ENCODE measurements at regions of chr2 and their contacts with region 1.

Region 1: DNA sequence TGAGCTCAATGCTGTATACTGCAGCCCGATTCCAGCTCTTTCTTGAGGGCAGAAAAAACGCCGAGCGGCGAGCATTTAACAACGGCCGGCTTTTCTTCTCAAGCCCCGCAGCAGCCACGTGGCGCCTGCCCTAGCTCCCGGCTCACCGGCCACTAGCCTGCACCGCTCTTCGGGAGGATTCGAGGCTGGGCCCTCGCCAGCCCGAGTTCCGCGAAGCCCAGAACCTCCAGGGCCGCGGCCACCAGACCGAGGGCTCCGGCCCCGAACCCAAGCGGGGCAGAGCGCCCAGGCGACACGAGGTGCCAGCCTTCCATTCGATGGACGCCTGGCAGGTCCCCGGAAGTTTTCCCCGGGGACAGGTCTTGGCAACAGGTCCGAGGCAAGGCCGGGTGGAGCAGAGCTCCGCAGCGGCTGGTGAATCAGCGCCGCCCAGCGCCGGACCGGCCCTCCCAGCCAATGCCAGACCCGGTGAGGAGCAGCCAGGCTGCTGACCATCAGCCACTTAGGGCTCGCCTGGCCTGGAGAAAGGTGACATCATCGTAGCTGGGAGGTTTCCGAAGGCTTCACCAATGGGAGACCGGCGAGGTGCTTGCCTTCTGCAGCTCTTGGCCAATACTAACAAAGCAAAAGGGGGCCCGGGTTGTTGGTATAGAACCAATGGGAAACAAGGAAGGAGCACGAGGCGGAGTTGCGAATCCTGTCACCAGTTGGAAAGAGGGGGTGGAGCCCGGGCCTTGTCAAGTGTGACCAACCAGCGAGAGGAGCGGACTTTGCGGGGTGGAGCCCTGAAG is 544 bp upstream of the MXD1 start:
- DNase-seq: peak; percentile 99 to 100 (median 100)
- H3K4me3 ChIP-seq: peak overlapping the region; percentile 89
- H3K4me3 Mint-ChIP-seq: peak overlapping the region; percentile 81 to 92 (median 88)
- H3K27ac ChIP-seq: peak overlapping the region; percentile 94
- H3K27ac Mint-ChIP-seq: peak overlapping the region; percentile 78 to 97 (median 92)
- H3K4me1 ChIP-seq: peaks cover 12% of the 10 kb centered on the region
- H3K4me1 Mint-ChIP-seq: peaks cover 24 to 44% (median 39%) of the 10 kb centered on the region in 3 donors
- H3K27me3 ChIP-seq: no peaks in the 10 kb centered on the region
- H3K27me3 Mint-ChIP-seq: no peaks in the 10 kb centered on the region

Region 2: GRCh38 chr2:70070541-70071268 is 156.3 kb after region 1 on chr2:
- CTCF ChIA-PET with region 1: interaction called, 20 read pairs
- POLR2A ChIA-PET with region 1: interaction called, 19 read pairs
- DNase-seq: peak; percentile 30 to 79 (median 74)
- H3K4me3 ChIP-seq: peak overlapping the region; percentile 33
- H3K4me3 Mint-ChIP-seq: peak overlapping the region; percentile 54 to 86 (median 78)
- H3K27ac ChIP-seq: peak overlapping the region; percentile 12
- H3K27ac Mint-ChIP-seq: peak overlapping the region; percentile 87 to 99 (median 98)
- H3K4me1 ChIP-seq: peaks cover 48% of the 10 kb centered on the region
- H3K4me1 Mint-ChIP-seq: peaks cover 41 to 52% (median 47%) of the 10 kb centered on the region in 3 donors
- H3K27me3 ChIP-seq: no peaks in the 10 kb centered on the region
- H3K27me3 Mint-ChIP-seq: no peaks in the 10 kb centered on the region

Region 3: GRCh38 chr2:70124983-70125480 is 210.7 kb after region 1 on chr2:
- CTCF ChIA-PET with region 1: interaction called, 8 read pairs
- POLR2A ChIA-PET with region 1: interaction called, 23 read pairs
- DNase-seq: peak in 4 of 5 donors; percentile 45 to 79 (median 62)
- H3K4me3 ChIP-seq: peak overlapping the region; percentile 84
- H3K4me3 Mint-ChIP-seq: peak overlapping the region; percentile 86 to 98 (median 95)
- H3K27ac ChIP-seq: peak overlapping the region; percentile 90
- H3K27ac Mint-ChIP-seq: peak overlapping the region; percentile 98 to 100 (median 100)
- H3K4me1 ChIP-seq: peaks cover 63% of the 10 kb centered on the region
- H3K4me1 Mint-ChIP-seq: peaks cover 61 to 82% (median 81%) of the 10 kb centered on the region in 3 donors
- H3K27me3 ChIP-seq: no peaks in the 10 kb centered on the region
- H3K27me3 Mint-ChIP-seq: peaks cover 0 to 6% of the 10 kb centered on the region in 2 donors

Region 4: DNA sequence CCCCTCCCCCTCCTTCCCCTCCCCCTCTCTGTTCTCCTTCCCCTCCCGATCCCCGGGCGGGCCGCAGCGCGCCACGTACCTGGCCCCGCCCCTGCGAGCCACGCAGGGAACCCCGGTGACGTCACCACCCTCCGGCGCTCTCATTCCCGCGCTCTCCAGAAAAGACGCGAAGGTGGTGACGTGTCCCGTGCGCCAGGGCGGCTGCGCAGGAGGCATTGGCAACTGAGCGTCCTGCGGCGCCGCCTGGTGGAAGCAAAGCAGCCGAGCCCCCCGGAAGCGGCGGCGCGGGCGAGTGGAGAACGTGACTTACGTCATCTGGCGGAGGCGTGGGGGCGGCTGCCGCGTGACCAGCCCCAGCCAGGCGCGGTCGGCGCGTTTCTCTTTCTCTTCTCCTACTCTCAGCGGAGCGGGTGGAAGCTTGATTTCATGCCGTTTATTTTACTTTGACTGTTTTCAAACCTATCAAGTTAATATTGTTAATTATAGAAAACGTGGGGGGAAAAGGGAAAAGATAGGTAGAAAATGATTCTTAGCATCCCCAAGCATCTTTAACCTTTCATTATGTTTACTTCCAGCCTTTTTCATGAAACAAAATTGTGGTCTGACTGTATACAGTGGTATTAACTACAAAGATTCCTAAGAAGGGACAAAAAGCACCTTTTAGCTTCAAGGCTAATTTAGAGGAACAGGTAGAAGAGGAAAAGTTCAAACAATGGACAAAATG is 228.4 kb after region 1 on chr2:
- CTCF ChIA-PET with region 1: interaction called, 31 read pairs
- POLR2A ChIA-PET with region 1: interaction called, 52 read pairs
- DNase-seq: peak; percentile 99 to 100 (median 100)
- H3K4me3 ChIP-seq: peak overlapping the region; percentile 65
- H3K4me3 Mint-ChIP-seq: peak overlapping the region; percentile 83 to 94 (median 91)
- H3K27ac ChIP-seq: peak overlapping the region; percentile 99
- H3K27ac Mint-ChIP-seq: peak overlapping the region; percentile 98 to 100 (median 100)
- H3K4me1 ChIP-seq: peaks cover 46% of the 10 kb centered on the region
- H3K4me1 Mint-ChIP-seq: peaks cover 48 to 70% (median 55%) of the 10 kb centered on the region in 3 donors
- H3K27me3 ChIP-seq: no peaks in the 10 kb centered on the region
- H3K27me3 Mint-ChIP-seq: peaks cover 0 to 4% of the 10 kb centered on the region in 2 donors

Region 5: GRCh38 chr2:70258532-70258874 is 344.1 kb after region 1 on chr2:
- CTCF ChIA-PET with region 1: no interaction called
- POLR2A ChIA-PET with region 1: interaction called, 22 read pairs
- DNase-seq: no peak
- H3K4me3 ChIP-seq: peak overlapping the region; percentile 86
- H3K4me3 Mint-ChIP-seq: peak overlapping the region; percentile 89 to 96 (median 92)
- H3K27ac ChIP-seq: peak overlapping the region; percentile 57
- H3K27ac Mint-ChIP-seq: peak overlapping the region in 7 of 8 donors; percentile 53 to 90 (median 75)
- H3K4me1 ChIP-seq: peaks cover 17% of the 10 kb centered on the region
- H3K4me1 Mint-ChIP-seq: peaks cover 26 to 52% (median 37%) of the 10 kb centered on the region in 3 donors
- H3K27me3 ChIP-seq: no peaks in the 10 kb centered on the region
- H3K27me3 Mint-ChIP-seq: no peaks in the 10 kb centered on the region

Measured in CD8-positive, alpha-beta memory T cell (primary cell).